ENCODE measurements at regions of chr16 and their contacts with region 1.

Region 1: GRCh38 chr16:70511833-70512232 is 11.5 kb downstream of the COG4 start:
- DNase-seq: no peak
- H3K4me3 Mint-ChIP-seq: no peak overlapping the region
- H3K27ac Mint-ChIP-seq: no peak overlapping the region
- H3K4me1 Mint-ChIP-seq: peaks cover 11% of the 10 kb centered on the region
- H3K27me3 Mint-ChIP-seq: no peaks in the 10 kb centered on the region

Region 2: GRCh38 chr16:70342016-70342415 is 169.8 kb before region 1 on chr16:
- CTCF ChIA-PET with region 1: no interaction called
- POLR2A ChIA-PET with region 1: no interaction called
- DNase-seq: no peak
- H3K4me3 Mint-ChIP-seq: no peak overlapping the region
- H3K27ac Mint-ChIP-seq: no peak overlapping the region
- H3K4me1 Mint-ChIP-seq: peaks cover 11% of the 10 kb centered on the region
- H3K27me3 Mint-ChIP-seq: no peaks in the 10 kb centered on the region

Region 3: DNA sequence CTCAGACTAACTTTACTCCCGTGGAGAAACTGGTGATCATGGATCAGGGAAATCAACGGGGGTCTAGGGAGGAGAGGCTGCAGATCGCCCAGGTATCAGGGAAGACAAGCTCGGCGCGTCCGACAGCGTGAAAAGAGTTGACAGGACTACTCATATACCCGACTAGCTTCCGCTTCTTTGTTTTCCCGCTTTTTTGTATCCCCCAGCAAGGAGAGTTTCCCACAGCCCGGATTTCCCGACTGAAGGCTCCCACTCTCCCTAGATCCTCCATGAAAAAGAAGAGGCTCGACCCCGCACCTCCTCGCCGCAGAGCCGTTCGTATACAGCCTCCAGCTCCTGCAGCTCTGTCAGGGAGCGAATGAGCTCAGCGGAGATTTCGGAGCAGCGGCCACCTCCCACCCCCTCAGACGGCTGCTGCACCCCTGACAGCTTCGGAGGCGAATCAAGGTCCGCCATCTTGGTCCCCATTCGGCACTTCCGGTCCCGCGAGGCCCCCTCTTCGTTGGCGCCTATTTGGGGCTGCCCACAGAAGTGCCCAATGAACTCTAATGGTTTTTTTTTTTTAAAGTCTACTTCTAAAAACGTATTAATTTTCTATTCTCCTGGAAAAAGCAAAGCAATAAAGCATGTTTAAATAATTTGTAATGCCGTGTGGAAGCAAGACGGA is 11.4 kb after region 1 on chr16 and contains the start of gene COG4:
- CTCF ChIA-PET with region 1: interaction called, 7 read pairs
- POLR2A ChIA-PET with region 1: interaction called, 10 read pairs
- DNase-seq: peak; percentile 94
- H3K4me3 Mint-ChIP-seq: peak within 1 kb of the TSS; percentile 87
- H3K27ac Mint-ChIP-seq: peak within 1 kb of the TSS; percentile 97
- H3K4me1 Mint-ChIP-seq: peaks cover 47% of the 10 kb centered on the region
- H3K27me3 Mint-ChIP-seq: no peaks in the 10 kb centered on the region
- total RNA-seq, gene COG4: 59.8 to 70.8 TPM

Measured in activated CD4-positive, alpha-beta T cell treated with anti-CD3 and anti-CD28 coated beads, Interleukin-2, amount 10 ng/mL, durations not matched to agents 7 days and 5 days (primary cell).